Mammary epithelial cell (primary cell): ENCODE measurements at regions of chr10 and their contacts with region 1.

Region 1: DNA sequence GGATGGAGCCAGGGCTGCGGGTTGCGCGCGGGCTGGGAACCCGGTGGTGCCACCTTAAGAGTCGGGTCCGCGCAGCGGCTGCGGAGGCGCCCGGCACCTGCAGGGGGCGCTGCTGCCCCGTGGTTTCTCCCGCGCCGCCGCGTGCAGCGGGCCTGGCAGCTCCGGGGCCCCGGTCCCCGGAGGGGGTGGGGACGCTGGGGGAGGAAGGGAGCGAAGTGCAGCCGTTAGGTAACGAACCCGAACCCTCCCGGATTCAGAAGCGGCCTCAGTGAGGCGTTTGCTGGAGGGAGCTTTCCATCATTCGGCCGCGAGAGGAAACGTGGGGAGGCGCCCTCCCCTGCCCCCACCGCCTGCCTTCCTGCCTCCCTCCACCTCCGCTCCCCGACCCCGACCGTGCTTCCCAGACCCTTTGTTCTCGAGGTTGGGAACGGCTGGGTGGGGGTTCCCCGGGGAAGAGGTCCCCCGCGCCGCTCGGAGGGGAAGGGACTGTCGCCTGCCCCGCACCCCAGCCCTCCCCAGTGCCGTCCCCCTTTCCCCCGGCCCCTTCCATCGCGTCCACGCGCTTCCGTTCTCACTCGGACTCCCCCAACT is 29.6 kb downstream of the SKIDA1 start:
- DNase-seq: peak; percentile 83
- H3K4me3 ChIP-seq: peak overlapping the region; percentile 69 to 84 (median 80)
- H3K27ac ChIP-seq: no peak overlapping the region
- H3K4me1 ChIP-seq: peaks cover 15% of the 10 kb centered on the region
- H3K27me3 ChIP-seq: peaks cover 2% of the 10 kb centered on the region
- CTCF ChIP-seq: peak; percentile 64 to 81

Region 2: DNA sequence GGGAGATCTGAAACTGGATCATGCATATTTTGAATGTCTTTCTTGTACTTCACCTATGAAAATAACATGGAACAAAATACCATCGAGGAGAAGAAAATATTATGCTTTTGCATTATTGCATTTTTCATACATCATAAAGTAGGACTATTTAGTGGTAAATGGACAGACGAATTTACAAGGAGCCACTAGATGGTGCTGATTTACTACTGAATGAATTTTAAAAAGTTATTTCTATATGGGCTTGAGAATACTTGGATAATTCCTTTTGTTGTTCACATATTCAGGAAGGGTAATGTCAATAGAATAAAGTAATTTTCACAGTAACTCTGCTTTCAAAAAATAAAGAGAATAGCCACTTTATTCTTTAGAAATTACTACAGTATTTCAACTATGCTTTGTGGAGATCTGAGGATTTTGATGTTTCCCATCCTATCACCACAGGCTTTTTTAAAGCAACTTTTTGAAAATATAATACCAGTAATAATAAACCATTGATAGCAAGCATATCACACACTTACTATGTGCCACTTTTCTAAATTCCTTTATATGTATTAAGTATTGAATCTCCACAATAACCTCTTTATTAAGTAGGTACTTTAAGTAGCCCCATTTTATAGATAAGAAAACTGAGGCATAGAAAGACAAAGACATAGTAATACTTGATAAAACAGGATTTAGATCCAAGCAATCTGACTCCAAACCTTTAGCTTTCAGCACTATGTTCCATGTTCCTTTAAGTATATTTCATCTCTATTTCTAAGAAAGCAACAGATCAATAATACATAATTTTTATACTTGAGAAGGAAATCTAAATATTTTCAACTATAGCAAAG is 637.3 kb before region 1 on chr10:
- CTCF ChIA-PET with region 1: no interaction called
- dilution Hi-C with region 1: no loop called
- in situ Hi-C with region 1: no loop called
- intact Hi-C with region 1: loop called (anchors 2 kb)
- DNase-seq: peak; percentile 25
- H3K4me3 ChIP-seq: no peak overlapping the region
- H3K27ac ChIP-seq: no peak overlapping the region
- H3K4me1 ChIP-seq: no peaks in the 10 kb centered on the region
- H3K27me3 ChIP-seq: no peaks in the 10 kb centered on the region
- CTCF ChIP-seq: peak; percentile 38 to 54

Region 3: GRCh38 chr10:21336476-21337170 is 159.2 kb before region 1 on chr10:
- CTCF ChIA-PET with region 1: interaction called, 4 read pairs
- dilution Hi-C with region 1: no loop called
- in situ Hi-C with region 1: no loop called
- intact Hi-C with region 1: loop called (anchors 2 kb)
- DNase-seq: peak; percentile 90
- H3K4me3 ChIP-seq: peak overlapping the region; percentile 0 to 15 (median 8)
- H3K27ac ChIP-seq: peak overlapping the region; percentile 53
- H3K4me1 ChIP-seq: peaks cover 30% of the 10 kb centered on the region
- H3K27me3 ChIP-seq: no peaks in the 10 kb centered on the region
- CTCF ChIP-seq: peak in 1 of 2 donors; percentile 26

Region 4: DNA sequence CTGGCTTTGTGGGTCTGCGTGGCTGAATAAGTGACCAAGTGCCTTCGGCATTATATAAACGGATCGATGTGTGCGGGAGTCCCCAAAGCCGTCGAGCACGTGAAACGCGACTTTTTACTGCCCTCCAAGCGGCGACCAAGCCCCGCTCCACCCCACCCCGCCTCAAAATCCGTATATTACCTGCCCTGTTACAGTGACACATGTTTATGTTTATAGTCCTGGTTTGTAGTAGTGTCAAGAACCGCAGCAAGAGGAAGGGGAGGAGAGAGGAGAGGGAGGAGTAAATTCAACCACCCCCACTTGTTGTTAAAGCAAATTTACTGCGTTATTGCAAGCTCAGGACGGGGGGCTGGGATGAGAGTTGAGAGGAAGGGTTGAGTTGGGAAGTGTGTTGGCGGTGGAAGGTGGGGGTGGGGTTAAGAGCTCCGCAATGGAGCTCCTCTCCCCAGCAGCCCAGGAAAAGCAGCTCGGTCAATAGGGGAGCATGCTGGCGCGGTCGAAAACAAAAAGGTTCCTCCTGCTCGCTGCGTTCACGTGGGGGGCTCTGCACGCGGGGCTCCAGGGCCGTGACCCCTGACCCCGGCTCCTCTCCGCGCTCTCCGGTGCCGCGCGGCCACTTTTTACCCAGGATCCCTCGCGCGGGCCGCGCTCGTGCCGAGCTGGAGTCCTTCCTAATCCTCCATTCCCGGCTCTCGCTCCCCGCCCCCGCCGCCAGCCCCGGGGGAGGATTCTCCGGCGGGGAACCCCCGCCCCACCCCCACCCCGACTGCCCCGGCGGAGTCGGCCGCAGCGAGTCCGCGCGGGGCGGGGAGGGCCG is 29.7 kb after region 1 on chr10 and contains the start of gene SKIDA1:
- CTCF ChIA-PET with region 1: interaction called, 13 read pairs
- dilution Hi-C with region 1: no loop called
- in situ Hi-C with region 1: no loop called
- intact Hi-C with region 1: loop called (anchors 2 kb)
- DNase-seq: peak; percentile 78
- H3K4me3 ChIP-seq: peak within 1 kb of the TSS; percentile 54 to 75 (median 68)
- H3K27ac ChIP-seq: peak within 1 kb of the TSS; percentile 92
- H3K4me1 ChIP-seq: peaks cover 22% of the 10 kb centered on the region
- H3K27me3 ChIP-seq: no peaks in the 10 kb centered on the region
- CTCF ChIP-seq: no peak
- total RNA-seq, gene SKIDA1: 1.3 to 1.5 TPM

Region 5: GRCh38 chr10:21989453-21990154 is 493.8 kb after region 1 on chr10:
- CTCF ChIA-PET with region 1: no interaction called
- dilution Hi-C with region 1: no loop called
- in situ Hi-C with region 1: no loop called
- intact Hi-C with region 1: loop called (anchors 1 kb)
- DNase-seq: peak; percentile 56
- H3K4me3 ChIP-seq: no peak overlapping the region
- H3K27ac ChIP-seq: no peak overlapping the region
- H3K4me1 ChIP-seq: no peaks in the 10 kb centered on the region
- H3K27me3 ChIP-seq: no peaks in the 10 kb centered on the region
- CTCF ChIP-seq: peak; percentile 52 to 73

Region 6: DNA sequence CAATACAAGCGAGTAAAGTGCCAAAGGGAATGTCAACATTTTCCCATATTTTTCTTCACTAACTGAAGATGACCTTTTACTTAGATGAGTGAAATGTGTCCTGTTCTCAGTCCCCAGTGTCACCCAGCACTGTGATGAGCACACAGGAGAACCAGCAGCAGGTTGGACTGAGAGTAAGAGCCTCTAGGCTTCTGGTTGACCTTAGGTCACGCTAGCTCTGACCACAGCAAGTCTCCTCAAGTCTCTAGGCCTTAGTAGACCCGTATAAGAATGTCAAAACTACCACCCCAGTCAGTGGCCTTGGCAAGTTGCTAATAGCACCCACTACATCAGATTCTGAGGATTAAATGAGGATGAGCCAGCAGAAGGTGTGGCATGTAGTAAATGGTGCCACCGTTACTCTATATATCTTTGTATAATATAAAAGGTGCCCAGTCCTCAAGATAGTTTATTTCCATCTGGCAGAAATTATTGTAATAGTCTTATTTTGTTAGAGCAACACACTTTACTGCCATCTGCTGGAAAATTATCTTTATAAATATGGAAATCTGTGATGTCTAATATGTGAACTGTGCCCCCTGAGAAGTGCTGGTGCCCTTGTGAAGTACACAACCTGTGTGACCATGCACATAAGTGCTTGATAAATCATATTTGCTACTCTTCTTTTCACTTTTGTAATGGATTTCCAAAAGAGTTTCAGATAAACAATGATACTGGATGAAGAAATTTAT is 925.1 kb after region 1 on chr10:
- CTCF ChIA-PET with region 1: no interaction called
- dilution Hi-C with region 1: no loop called
- in situ Hi-C with region 1: no loop called
- intact Hi-C with region 1: loop called (anchors 5 kb)
- DNase-seq: no peak
- H3K4me3 ChIP-seq: no peak overlapping the region
- H3K27ac ChIP-seq: no peak overlapping the region
- H3K4me1 ChIP-seq: no peaks in the 10 kb centered on the region
- H3K27me3 ChIP-seq: no peaks in the 10 kb centered on the region
- CTCF ChIP-seq: peak in 1 of 2 donors; percentile 29